Sciatic nerve (tissue), 2 donors: ENCODE measurements at regions of chr3 and their contacts with region 1.

Region 1: GRCh38 chr3:105997800-105998526 is 129.2 kb upstream of the CBLB start:
- DNase-seq: no peak
- ATAC-seq: peak; percentile 89

Region 2: DNA sequence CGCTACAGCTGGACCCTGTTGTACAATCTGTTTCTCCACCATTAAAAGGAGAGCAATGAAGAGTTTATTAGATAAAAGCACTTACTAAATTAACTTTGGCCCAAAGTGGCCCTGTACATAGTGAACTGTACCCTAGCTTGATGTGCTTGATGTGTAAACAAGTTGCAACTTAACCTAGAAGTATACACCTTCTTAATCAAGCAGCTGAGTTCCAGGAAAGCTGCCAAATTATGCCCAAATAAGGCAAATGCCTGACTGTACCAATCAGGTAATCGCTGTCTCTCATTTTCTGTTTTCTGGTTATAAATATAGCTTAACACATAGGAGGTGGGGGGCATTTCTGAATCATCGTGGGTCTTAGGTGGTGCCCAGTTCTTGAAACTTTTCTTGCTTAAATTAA is 575.6 kb after region 1 on chr3:
- intact Hi-C with region 1: loop called (anchors 5 kb)
- DNase-seq: no peak
- ATAC-seq: no peak